ENCODE measurements at regions of chr9 and their contacts with region 1.

Region 1: GRCh38 chr9:110217656-110218099 is 9.7 kb upstream of the C9orf152 start:
- DNase-seq: peak in 1 of 2 experiments; percentile 63
- ATAC-seq: peak in 1 of 2 experiments; percentile 38; a peak in 2 of 6 replicates
- H3K4me3 ChIP-seq: no peak overlapping the region
- H3K27ac ChIP-seq: peak overlapping the region; percentile 31 to 38; a peak in 1 of 6 replicates
- H3K4me1 ChIP-seq: peaks cover 6% of the 10 kb centered on the region; the same call in 2 of the 3 replicates
- CTCF ChIP-seq: peak; percentile 85
- EP300 ChIP-seq: no peak
- POLR2A ChIP-seq: no peak
- RAD21 ChIP-seq: peak; percentile 69 to 82

Region 2: DNA sequence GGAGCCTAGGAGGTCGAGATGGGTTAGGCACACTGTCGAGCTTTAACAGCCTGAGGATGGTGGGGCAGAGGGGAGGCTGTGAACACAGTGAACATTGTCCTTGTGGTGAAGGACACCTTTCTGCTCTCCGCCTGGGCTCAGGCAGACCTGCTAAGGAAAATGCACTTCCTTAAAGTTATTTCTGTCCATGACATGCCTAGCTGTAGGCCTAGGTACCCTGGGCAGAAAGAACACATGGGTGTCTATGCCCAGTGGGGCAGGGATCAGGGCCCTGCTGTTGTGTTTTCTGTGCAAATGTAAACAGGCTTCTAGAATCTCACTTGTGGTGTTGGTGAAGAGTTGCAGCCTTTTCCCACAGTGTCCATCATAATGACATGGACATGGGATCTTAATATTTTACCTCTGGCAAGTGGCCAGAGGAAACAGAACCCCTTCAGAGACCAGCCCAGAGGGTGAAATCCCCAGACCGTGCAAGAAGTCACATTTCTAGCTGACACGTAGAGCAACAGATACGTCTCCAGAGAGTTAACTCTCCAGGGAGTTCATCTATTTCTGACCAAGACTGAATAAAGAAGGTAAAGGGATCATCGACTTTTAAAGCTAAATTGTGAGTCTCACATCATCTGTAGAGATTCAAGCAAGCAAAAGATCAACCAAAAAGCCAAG is 88.9 kb before region 1 on chr9:
- CTCF ChIA-PET with region 1: no interaction called
- POLR2A ChIA-PET with region 1: no interaction called
- DNase-seq: no peak
- ATAC-seq: no peak
- H3K4me3 ChIP-seq: no peak overlapping the region
- H3K27ac ChIP-seq: 0 out of 6 replicates have a peak overlapping the region, but pooled peaks of 1 of the 2 experiments have one; percentile 8
- H3K4me1 ChIP-seq: peaks cover 64% of the 10 kb centered on the region
- CTCF ChIP-seq: no peak
- EP300 ChIP-seq: no peak
- POLR2A ChIP-seq: no peak
- RAD21 ChIP-seq: no peak

Region 3: GRCh38 chr9:110207071-110207946 is 10.4 kb before region 1 on chr9:
- CTCF ChIA-PET with region 1: interaction called, 12 read pairs
- POLR2A ChIA-PET with region 1: no interaction called
- DNase-seq: no peak
- ATAC-seq: no peak; a peak in 3 of 6 replicates
- H3K4me3 ChIP-seq: no peak overlapping the region
- H3K27ac ChIP-seq: peak overlapping the region; percentile 3 to 48; a peak in 3 of 6 replicates
- H3K4me1 ChIP-seq: peaks cover 10% of the 10 kb centered on the region; the same call in 2 of the 3 replicates
- CTCF ChIP-seq: no peak
- EP300 ChIP-seq: no peak
- POLR2A ChIP-seq: no peak
- RAD21 ChIP-seq: no peak

Region 4: GRCh38 chr9:110228960-110229359 is 11.3 kb after region 1 on chr9:
- CTCF ChIA-PET with region 1: interaction called, 16 read pairs
- POLR2A ChIA-PET with region 1: no interaction called
- DNase-seq: no peak
- ATAC-seq: no peak
- H3K4me3 ChIP-seq: no peak overlapping the region
- H3K27ac ChIP-seq: no peak overlapping the region
- H3K4me1 ChIP-seq: no peaks in the 10 kb centered on the region
- CTCF ChIP-seq: no peak
- EP300 ChIP-seq: no peak
- POLR2A ChIP-seq: no peak
- RAD21 ChIP-seq: no peak

Measured in A549 (cell line).